ENCODE measurements at regions of chr12 and their contacts with region 1.

Region 1: DNA sequence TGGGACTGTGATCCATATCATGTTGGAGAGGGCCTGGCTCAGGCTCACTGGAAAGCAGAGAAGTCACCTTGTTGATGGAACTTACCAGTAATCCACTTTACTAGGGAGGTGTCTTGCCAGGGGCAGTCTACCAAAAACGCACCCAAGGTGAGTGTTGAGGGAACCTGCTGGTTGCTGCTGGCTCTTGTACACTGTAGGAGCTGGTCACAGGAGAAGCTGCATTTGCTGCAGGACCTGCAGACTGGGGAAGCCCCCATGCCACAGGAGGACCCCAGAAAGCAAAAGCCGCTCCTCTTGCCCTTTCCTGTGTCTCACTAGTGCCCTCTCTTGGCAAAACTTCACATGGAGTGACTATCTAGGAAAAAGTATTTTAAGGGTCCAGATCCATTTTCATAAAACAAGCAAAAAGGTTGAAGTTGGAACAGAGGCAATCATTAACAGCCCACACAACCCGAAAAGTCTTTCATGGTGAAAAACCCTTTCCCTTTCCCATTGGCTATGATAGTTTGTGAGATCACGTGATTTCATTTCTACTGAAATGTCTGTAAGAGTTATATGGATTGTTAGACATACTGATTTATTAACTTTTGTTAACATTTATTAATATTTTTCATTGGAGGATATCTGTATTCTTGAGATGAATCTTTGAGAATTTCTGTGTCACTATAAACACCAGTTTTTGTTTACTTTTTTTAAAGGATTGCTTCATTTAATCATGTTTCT is 59.2 kb downstream of the RASSF8 start:
- DNase-seq: peak in 3 of 7 donors; percentile 34 to 57 (median 44)
- H3K4me3 ChIP-seq: no peak overlapping the region
- H3K27ac ChIP-seq: no peak overlapping the region
- H3K4me1 ChIP-seq: peaks cover 0 to 22% of the 10 kb centered on the region in 2 donors
- H3K27me3 ChIP-seq: no peaks in the 10 kb centered on the region
- CTCF ChIP-seq: peak in 5 of 6 experiments; percentile 36 to 58 (median 50)
- POLR2A ChIP-seq: no peak

Region 2: DNA sequence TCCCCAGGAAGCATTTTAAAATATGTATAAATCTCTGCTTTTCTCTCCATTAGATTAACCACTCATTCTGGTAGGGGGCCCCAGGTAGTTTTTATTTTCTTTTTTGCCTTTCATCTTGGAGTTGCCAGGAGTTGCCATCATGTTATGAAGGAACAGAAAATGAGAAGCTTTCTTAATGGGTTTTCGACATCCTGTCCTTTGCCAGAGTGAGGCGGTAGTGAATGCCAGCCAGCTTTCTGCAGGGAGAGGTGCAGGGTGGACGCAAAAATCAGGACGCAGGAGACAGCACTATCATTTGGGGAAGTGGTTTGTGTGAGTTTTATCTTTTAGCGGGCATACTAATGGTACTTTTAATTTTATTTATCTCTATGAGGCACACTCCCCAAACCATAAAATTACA is 57.5 kb before region 1 on chr12:
- intact Hi-C with region 1: loop called (anchors 10 kb)
- DNase-seq: peak; percentile 34 to 70 (median 51)
- H3K4me3 ChIP-seq: peak overlapping the region in 2 of 4 donors; percentile 52 to 97
- H3K27ac ChIP-seq: peak overlapping the region in 4 of 5 donors; percentile 86 to 100 (median 98)
- H3K4me1 ChIP-seq: peaks cover 7 to 43% of the 10 kb centered on the region in 2 donors
- H3K27me3 ChIP-seq: no peaks in the 10 kb centered on the region
- CTCF ChIP-seq: no peak
- POLR2A ChIP-seq: peak in 1 of 2 donors; percentile 11

Region 3: GRCh38 chr12:26580619-26581018 is 563.0 kb after region 1 on chr12:
- intact Hi-C with region 1: no loop called
- DNase-seq: no peak
- H3K4me3 ChIP-seq: no peak overlapping the region
- H3K27ac ChIP-seq: no peak overlapping the region
- H3K4me1 ChIP-seq: no peaks in the 10 kb centered on the region
- H3K27me3 ChIP-seq: no peaks in the 10 kb centered on the region
- CTCF ChIP-seq: no peak
- POLR2A ChIP-seq: no peak

Measured in adrenal gland (tissue), 19 donors.